Posterior cingulate gyrus (tissue), 11 donors: ENCODE measurements at regions of chr5 and their contacts with region 1.

Region 1: GRCh38 chr5:176959051-176959450 is 47.5 kb downstream of the UIMC1 start:
- DNase-seq: no peak

Region 2: GRCh38 chr5:176152191-176152929 is 806.7 kb before region 1 on chr5:
- intact Hi-C with region 1: no loop called
- DNase-seq: no peak

Region 3: GRCh38 chr5:176660860-176661641 is 298.0 kb before region 1 on chr5:
- intact Hi-C with region 1: loop called (anchors 2 kb)
- DNase-seq: peak; percentile 57 to 97 (median 82)

Region 4: DNA sequence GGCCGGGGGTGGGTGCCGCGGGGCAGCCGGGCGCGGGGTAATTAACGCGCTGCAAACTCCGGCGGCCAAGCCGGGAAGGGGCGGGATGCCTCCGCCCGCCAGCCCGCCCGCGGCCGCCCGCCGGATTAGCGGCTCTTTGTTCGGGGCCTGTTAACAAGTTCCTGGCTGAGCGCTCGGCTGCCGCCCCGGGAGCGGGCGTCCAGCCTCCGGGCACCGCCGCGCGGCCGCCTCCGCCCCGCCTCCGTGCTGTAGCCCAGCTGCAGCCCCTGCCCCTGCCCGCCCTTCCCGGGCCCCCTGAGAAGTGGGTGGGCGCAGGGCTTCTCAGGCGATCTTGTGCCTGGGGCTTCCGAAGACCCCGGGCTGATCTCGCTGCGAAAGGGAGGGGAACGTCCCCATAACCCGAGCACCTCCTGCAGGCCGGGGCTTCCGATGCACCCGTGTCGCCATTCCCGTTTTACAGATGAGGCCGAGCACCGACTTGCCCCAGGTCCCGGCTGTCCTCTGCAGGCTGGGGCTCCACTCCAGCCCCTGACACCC is 141.1 kb before region 1 on chr5:
- intact Hi-C with region 1: loop called (anchors 10 kb)
- DNase-seq: peak in 5 of 10 donors; percentile 31 to 90 (median 88)

Region 5: GRCh38 chr5:177241768-177242167 is 282.7 kb after region 1 on chr5:
- intact Hi-C with region 1: no loop called
- DNase-seq: no peak

Region 6: GRCh38 chr5:177288191-177288590 is 329.1 kb after region 1 on chr5:
- intact Hi-C with region 1: no loop called
- DNase-seq: no peak

Region 7: GRCh38 chr5:178651046-178651810 is 1692.2 kb after region 1 on chr5:
- intact Hi-C with region 1: no loop called
- DNase-seq: no peak